Breast epithelium (tissue), 4 donors: ENCODE measurements at regions of chr1 and their contacts with region 1.

Region 1: GRCh38 chr1:61757945-61758344 is 15.7 kb downstream of the PATJ start:
- DNase-seq: no peak
- H3K4me3 ChIP-seq: no peak overlapping the region
- H3K27ac ChIP-seq: no peak overlapping the region
- H3K4me1 ChIP-seq: no peaks in the 10 kb centered on the region
- H3K27me3 ChIP-seq: no peaks in the 10 kb centered on the region
- CTCF ChIP-seq: no peak
- POLR2A ChIP-seq: no peak

Region 2: DNA sequence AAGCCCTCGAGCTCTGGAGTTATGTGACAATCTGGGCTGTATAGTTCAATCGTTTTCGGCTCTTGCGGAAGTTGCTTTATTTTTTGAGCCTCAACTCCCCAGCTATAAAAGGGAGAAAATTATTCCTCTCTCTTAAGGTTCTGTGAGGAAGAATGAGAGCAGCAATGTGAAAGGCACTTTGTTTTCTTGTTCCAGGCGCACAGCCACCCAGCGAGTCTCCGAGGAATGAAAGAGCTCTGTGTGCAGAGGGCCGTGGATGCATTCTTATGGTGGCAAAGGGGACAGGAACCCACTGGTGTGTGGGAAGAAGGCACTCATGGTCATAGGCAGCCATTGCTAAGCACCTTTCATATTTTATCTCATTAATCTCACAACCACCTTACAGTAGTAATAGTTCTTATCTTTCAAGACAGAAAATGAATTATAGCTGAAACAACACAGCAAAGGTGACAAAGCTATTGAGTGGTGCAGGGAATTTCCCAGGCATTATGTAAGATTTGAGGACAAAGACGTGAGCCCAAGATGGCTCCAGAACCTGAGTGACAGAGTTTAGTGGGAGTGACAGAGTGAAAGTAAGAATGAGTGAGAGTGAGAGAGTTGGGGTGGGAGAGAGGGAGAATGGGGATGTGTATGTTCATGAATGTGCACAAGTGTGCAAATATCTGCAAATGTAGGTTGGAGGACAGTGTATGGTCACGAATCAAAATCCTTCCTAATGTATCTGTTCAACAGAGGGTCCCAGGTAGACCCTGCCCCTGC is 1840.7 kb before region 1 on chr1:
- intact Hi-C with region 1: loop called (anchors 10 kb)
- DNase-seq: no peak
- H3K4me3 ChIP-seq: peak overlapping the region in 2 of 3 donors; percentile 1 to 11
- H3K27ac ChIP-seq: peak overlapping the region; percentile 13 to 66
- H3K4me1 ChIP-seq: no peaks in the 10 kb centered on the region
- H3K27me3 ChIP-seq: no peaks in the 10 kb centered on the region
- CTCF ChIP-seq: no peak
- POLR2A ChIP-seq: no peak

Region 3: GRCh38 chr1:61864489-61864888 is 106.5 kb after region 1 on chr1:
- intact Hi-C with region 1: no loop called
- DNase-seq: no peak
- H3K4me3 ChIP-seq: no peak overlapping the region
- H3K27ac ChIP-seq: no peak overlapping the region
- H3K4me1 ChIP-seq: no peaks in the 10 kb centered on the region
- H3K27me3 ChIP-seq: no peaks in the 10 kb centered on the region
- CTCF ChIP-seq: no peak
- POLR2A ChIP-seq: no peak